Psoas muscle (tissue), 8 donors: ENCODE measurements at regions of chr6 and their contacts with region 1.

Region 1: GRCh38 chr6:155174576-155175211 is 89.1 kb upstream of the CLDN20 start:
- DNase-seq: peak in 1 of 2 donors; percentile 62
- ATAC-seq: peak; percentile 86 to 94 (median 91)
- H3K4me3 ChIP-seq: no peak overlapping the region
- H3K27ac ChIP-seq: no peak overlapping the region
- H3K4me1 ChIP-seq: no peaks in the 10 kb centered on the region
- H3K27me3 ChIP-seq: no peaks in the 10 kb centered on the region
- CTCF ChIP-seq: peak; percentile 59

Region 2: GRCh38 chr6:154675602-154676088 is 499.0 kb before region 1 on chr6:
- intact Hi-C with region 1: loop called in 1 of 2 experiments (anchors 5 kb)
- DNase-seq: peak; percentile 78 to 84
- ATAC-seq: peak; percentile 98 to 100 (median 100)
- H3K4me3 ChIP-seq: no peak overlapping the region
- H3K27ac ChIP-seq: no peak overlapping the region
- H3K4me1 ChIP-seq: no peaks in the 10 kb centered on the region
- H3K27me3 ChIP-seq: no peaks in the 10 kb centered on the region
- CTCF ChIP-seq: peak; percentile 99

Region 3: DNA sequence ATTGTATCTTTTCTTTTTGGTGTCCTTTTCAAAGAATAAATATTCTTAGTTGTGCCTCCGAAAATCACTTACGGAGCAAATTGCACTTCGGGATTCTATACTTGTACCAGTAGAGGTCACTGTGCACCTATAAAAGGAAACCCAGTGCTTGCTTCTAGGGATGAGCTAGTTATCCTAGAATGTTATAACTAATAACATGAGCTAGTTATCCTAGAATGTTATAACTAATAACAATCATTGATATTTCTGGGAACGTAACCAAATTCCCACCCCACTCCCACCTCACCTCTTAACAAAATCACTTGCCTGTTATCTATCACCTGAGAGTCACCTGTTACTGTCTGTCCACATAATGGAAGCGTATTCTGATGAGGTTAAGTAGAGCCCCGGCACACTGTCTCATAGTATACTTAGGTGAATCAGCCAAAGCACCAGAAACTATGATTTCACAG is 306.5 kb before region 1 on chr6:
- intact Hi-C with region 1: loop called (anchors 2 to 5 kb)
- DNase-seq: no peak
- ATAC-seq: peak; percentile 66 to 86 (median 72)
- H3K4me3 ChIP-seq: no peak overlapping the region
- H3K27ac ChIP-seq: no peak overlapping the region
- H3K4me1 ChIP-seq: peaks cover 10% of the 10 kb centered on the region
- H3K27me3 ChIP-seq: no peaks in the 10 kb centered on the region
- CTCF ChIP-seq: peak; percentile 75

Region 4: GRCh38 chr6:154928325-154928922 is 246.3 kb before region 1 on chr6:
- intact Hi-C with region 1: loop called (anchors 1 to 5 kb)
- DNase-seq: no peak
- ATAC-seq: peak; percentile 43 to 79 (median 68)
- H3K4me3 ChIP-seq: no peak overlapping the region
- H3K27ac ChIP-seq: no peak overlapping the region
- H3K4me1 ChIP-seq: peaks cover 7% of the 10 kb centered on the region
- H3K27me3 ChIP-seq: no peaks in the 10 kb centered on the region
- CTCF ChIP-seq: peak; percentile 71

Region 5: DNA sequence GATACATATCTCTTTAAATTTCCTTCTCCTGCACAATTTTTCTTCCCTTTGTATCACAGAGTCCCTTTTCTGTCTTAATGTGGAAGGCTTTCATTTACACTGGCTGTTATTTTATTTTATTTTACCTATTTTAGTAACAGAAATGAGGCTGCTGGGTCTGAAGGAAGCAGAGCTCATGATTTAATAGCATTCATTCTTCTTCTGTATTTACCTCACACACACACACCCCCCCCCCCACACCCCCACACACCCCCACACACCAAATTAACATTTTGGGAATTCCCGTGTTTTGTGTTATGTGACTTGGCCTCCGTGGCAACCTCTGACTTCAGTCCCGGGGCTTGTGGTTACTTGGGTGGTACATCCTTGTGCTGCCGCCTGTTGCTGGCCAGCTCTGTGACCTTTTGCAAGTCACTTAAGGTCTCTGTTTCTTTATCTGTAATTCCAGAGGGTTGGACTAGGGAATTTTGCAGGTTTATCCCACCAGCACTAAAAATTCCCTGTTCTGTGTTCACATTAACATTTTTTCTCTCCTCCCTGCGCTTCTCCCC is 70.8 kb before region 1 on chr6:
- intact Hi-C with region 1: no loop called
- DNase-seq: no peak
- ATAC-seq: no peak
- H3K4me3 ChIP-seq: no peak overlapping the region
- H3K27ac ChIP-seq: no peak overlapping the region
- H3K4me1 ChIP-seq: peaks cover 14% of the 10 kb centered on the region
- H3K27me3 ChIP-seq: no peaks in the 10 kb centered on the region
- CTCF ChIP-seq: no peak

Region 6: DNA sequence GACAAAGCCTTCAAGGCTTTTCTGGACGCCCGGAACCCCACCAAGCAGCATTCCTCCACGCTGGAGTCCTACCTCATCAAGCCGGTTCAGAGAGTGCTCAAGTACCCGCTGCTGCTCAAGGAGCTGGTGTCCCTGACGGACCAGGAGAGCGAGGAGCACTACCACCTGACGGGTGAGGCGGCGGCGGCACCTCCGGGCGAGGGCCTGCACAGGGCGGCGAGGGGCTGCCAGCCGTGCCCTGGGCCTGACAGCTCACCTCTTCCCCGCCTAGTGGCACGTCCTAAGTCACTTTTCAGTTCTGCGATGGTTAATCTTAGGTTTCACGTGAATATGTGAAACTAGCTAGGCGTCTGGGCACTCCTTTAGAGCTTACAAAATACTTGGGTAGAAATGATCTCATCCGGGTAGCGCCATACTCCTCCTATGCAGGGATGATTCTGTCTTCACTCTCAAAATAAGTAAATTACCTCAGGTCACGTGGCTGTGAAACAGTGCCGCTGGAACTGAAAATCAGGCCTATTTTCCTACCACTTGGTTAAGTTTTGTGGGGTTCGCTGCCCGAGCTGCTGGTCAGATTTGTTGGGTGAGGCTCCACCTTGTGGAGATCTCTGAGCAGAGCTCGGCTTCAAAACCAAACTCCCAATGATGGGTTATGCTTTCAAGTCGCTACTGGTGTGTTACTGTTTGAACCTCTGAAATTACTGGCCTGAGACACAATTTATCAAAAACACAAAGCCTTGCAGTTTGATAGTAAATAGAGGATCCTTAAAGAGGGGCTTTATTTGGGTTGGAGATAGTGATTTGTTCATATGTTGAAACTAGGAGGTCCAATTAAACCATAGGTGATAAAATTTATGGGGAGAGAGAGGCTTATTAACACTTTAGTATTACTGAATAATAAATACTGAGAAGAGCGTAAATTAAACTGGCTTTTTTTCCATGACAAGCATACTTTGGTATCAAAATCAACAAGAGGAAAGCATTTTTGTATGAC is 73.6 kb after region 1 on chr6:
- intact Hi-C with region 1: loop called in 1 of 2 experiments (anchors 2 kb)
- DNase-seq: peak in 1 of 2 donors; percentile 23
- ATAC-seq: peak in 3 of 4 donors; percentile 42 to 66 (median 50)
- H3K4me3 ChIP-seq: no peak overlapping the region
- H3K27ac ChIP-seq: no peak overlapping the region
- H3K4me1 ChIP-seq: peaks cover 6% of the 10 kb centered on the region
- H3K27me3 ChIP-seq: no peaks in the 10 kb centered on the region
- CTCF ChIP-seq: peak; percentile 58

Region 7: GRCh38 chr6:155314773-155315515 is 140.2 kb after region 1 on chr6:
- intact Hi-C with region 1: loop called in 1 of 2 experiments (anchors 5 kb)
- DNase-seq: peak; percentile 59 to 79
- ATAC-seq: peak; percentile 79 to 86 (median 80)
- H3K4me3 ChIP-seq: peak overlapping the region; percentile 84
- H3K27ac ChIP-seq: peak overlapping the region; percentile 89
- H3K4me1 ChIP-seq: peaks cover 12% of the 10 kb centered on the region
- H3K27me3 ChIP-seq: no peaks in the 10 kb centered on the region
- CTCF ChIP-seq: no peak

Region 8: GRCh38 chr6:155530219-155530834 is 355.6 kb after region 1 on chr6:
- intact Hi-C with region 1: loop called in 1 of 2 experiments (anchors 10 kb)
- DNase-seq: no peak
- ATAC-seq: peak; percentile 46 to 74 (median 52)
- H3K4me3 ChIP-seq: no peak overlapping the region
- H3K27ac ChIP-seq: peak overlapping the region; percentile 82
- H3K4me1 ChIP-seq: peaks cover 7% of the 10 kb centered on the region
- H3K27me3 ChIP-seq: no peaks in the 10 kb centered on the region
- CTCF ChIP-seq: peak; percentile 74

Region 9: GRCh38 chr6:155543166-155543847 is 368.6 kb after region 1 on chr6:
- intact Hi-C with region 1: no loop called
- DNase-seq: no peak
- ATAC-seq: no peak
- H3K4me3 ChIP-seq: no peak overlapping the region
- H3K27ac ChIP-seq: no peak overlapping the region
- H3K4me1 ChIP-seq: no peaks in the 10 kb centered on the region
- H3K27me3 ChIP-seq: no peaks in the 10 kb centered on the region
- CTCF ChIP-seq: no peak